PC-9 (cell line): ENCODE measurements at regions of chr10 and their contacts with region 1.

Region 1: GRCh38 chr10:113872139-113873030 is 17.9 kb downstream of the NHLRC2 start:
- DNase-seq: no peak
- H3K4me3 ChIP-seq: no peak overlapping the region
- H3K27ac ChIP-seq: no peak overlapping the region
- H3K4me1 ChIP-seq: no peaks in the 10 kb centered on the region
- H3K27me3 ChIP-seq: no peaks in the 10 kb centered on the region
- CTCF ChIP-seq: no peak

Region 2: DNA sequence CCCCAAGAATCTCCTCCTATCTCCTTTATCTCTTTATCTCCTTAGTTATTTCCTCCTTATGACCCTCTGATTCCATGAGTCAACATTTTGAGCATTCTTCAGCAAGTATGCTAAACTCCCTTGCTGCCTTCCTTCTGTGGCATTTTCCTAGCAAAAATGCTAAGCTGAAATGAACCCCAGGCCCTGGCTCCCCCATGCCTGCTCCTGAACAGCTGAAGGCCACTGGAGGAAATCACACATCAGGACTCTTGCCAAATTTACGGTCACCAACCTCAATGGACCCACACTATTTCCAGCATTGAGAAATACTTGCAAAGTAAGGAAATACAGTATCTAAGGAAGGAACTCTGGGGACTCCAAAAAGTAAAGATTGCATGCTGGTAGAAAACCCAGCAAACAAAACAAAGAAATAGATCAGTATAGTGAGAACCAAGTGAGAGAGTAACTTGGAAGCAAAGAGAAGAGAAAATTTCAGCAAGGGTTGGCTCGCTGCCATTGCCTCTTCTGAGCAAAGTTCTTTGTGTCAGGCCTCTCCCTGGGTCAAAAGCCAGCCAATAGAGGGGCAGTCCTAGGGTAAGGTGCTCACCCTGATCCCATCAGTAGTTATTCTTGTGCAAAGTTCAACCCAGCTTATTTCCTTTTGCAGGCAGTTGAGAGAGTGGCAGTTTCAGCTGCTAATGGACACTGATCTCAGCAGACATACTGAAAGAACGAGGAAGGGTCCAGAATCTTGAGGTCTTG is 126.0 kb before region 1 on chr10:
- CTCF ChIA-PET with region 1: no interaction called
- POLR2A ChIA-PET with region 1: no interaction called
- intact Hi-C with region 1: no loop called
- DNase-seq: peak; percentile 35 to 39
- H3K4me3 ChIP-seq: no peak overlapping the region
- H3K27ac ChIP-seq: no peak overlapping the region
- H3K4me1 ChIP-seq: peaks cover 8% of the 10 kb centered on the region
- H3K27me3 ChIP-seq: no peaks in the 10 kb centered on the region
- CTCF ChIP-seq: no peak

Region 3: GRCh38 chr10:113993489-113993991 is 121.2 kb after region 1 on chr10:
- CTCF ChIA-PET with region 1: interaction called, 4 read pairs
- POLR2A ChIA-PET with region 1: interaction called, 11 read pairs
- intact Hi-C with region 1: no loop called
- DNase-seq: no peak
- H3K4me3 ChIP-seq: no peak overlapping the region
- H3K27ac ChIP-seq: no peak overlapping the region
- H3K4me1 ChIP-seq: no peaks in the 10 kb centered on the region
- H3K27me3 ChIP-seq: no peaks in the 10 kb centered on the region
- CTCF ChIP-seq: no peak

Region 4: GRCh38 chr10:114220281-114220680 is 347.9 kb after region 1 on chr10:
- CTCF ChIA-PET with region 1: no interaction called
- POLR2A ChIA-PET with region 1: no interaction called
- intact Hi-C with region 1: no loop called
- DNase-seq: no peak
- H3K4me3 ChIP-seq: no peak overlapping the region
- H3K27ac ChIP-seq: no peak overlapping the region
- H3K4me1 ChIP-seq: no peaks in the 10 kb centered on the region
- H3K27me3 ChIP-seq: no peaks in the 10 kb centered on the region
- CTCF ChIP-seq: no peak